Esophagus squamous epithelium (tissue), 5 donors: ENCODE measurements at regions of chr7 and their contacts with region 1.

Region 1: GRCh38 chr7:157273208-157274093 is 63.4 kb upstream of the DNAJB6 start:
- DNase-seq: no peak
- H3K4me3 ChIP-seq: peak overlapping the region in 1 of 4 donors; percentile 28
- H3K27ac ChIP-seq: peak overlapping the region in 1 of 4 donors; percentile 72
- H3K4me1 ChIP-seq: peaks cover 15 to 54% (median 29%) of the 10 kb centered on the region in 3 donors
- H3K27me3 ChIP-seq: peaks cover 0 to 4% (median 0%) of the 10 kb centered on the region in 4 donors
- CTCF ChIP-seq: peak; percentile 91 to 95 (median 95)
- POLR2A ChIP-seq: no peak

Region 2: DNA sequence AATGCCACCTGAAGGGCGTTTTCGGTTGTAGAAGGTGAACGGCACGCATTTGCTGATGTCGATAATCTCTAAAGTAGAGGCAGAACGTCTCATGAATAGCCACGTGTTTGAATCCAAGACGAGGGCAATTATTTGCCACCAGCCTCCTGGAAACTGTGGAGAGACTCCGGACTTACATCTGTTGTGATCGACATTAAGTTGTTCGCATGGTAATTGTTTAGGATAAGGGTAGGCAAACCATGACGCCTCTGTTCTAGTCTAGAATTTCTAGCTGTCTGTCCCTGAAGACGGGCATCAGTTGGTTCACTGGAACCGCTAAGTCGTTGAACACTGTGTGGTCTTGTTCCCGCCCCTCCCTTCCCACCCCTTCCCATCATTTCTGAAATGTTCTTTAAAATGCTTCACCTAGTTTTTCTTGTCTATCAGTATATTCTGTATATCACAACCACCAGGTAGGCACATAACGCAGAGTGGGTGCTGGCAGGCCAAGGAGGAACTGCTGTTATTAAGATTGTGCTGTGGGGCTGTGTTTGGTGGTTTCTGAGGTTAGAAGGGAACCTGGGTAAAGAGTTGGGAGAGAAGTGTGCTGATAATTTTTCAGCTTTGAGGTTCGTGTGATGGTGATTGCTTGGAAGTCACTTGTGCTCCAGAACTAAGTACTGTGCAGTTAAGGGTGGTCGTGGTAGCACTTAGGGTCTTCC is 133.5 kb before region 1 on chr7:
- intact Hi-C with region 1: loop called (anchors 10 kb)
- DNase-seq: no peak
- H3K4me3 ChIP-seq: peak overlapping the region; percentile 56 to 85 (median 82)
- H3K27ac ChIP-seq: peak overlapping the region; percentile 90 to 99 (median 94)
- H3K4me1 ChIP-seq: peaks cover 13 to 62% (median 21%) of the 10 kb centered on the region in 3 donors
- H3K27me3 ChIP-seq: no peaks in the 10 kb centered on the region
- CTCF ChIP-seq: no peak
- POLR2A ChIP-seq: no peak

Region 3: DNA sequence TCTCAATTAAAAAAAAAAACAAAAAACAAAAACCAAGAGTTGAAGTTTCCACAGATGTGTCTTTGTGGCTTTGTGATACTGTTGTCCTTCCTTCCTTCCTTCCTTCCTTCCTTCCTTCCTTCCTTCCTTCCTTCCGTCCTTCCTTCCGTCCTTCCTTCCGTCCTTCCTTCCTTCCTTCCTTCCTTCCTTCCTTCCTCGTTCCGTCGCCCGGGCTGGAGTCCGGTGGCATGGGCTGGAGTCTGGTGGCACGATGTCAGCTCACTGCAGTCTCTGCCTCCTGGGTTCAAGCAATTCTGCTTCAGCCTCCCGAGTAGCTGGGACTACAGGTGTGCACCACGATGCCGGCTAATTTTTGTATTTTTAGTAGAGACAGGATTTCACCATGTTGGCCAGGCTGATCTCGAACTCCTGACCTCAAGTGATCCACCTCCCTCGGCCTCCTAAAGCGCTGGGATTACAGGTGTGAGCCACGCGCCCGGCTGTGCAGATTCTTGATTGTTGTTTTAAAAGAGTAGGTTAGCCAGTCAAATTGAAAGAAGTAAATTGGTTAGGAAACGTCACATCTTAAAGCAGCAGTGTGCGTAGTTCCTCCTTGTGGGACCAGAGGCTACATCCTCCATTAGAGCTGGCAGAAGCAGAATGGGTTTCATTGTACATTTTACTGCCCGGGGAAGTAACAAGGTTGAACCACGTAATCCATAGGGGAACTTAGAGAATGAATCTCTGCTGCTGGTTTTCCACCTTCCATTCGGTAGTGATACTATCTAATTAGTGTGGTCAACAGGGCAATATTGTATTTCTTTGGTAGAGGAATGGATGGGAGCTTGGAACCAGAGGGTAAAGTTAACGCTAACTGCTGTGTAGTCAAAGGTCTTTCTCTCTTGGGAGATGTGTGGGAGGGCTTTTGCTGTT is 83.9 kb after region 1 on chr7:
- intact Hi-C with region 1: no loop called
- DNase-seq: no peak
- H3K4me3 ChIP-seq: no peak overlapping the region
- H3K27ac ChIP-seq: peak overlapping the region; percentile 30 to 83 (median 69)
- H3K4me1 ChIP-seq: peaks cover 34 to 75% (median 53%) of the 10 kb centered on the region in 3 donors
- H3K27me3 ChIP-seq: no peaks in the 10 kb centered on the region
- CTCF ChIP-seq: no peak
- POLR2A ChIP-seq: no peak